Caco-2 (cell line): ENCODE measurements at regions of chr7 and their contacts with region 1.

Region 1: DNA sequence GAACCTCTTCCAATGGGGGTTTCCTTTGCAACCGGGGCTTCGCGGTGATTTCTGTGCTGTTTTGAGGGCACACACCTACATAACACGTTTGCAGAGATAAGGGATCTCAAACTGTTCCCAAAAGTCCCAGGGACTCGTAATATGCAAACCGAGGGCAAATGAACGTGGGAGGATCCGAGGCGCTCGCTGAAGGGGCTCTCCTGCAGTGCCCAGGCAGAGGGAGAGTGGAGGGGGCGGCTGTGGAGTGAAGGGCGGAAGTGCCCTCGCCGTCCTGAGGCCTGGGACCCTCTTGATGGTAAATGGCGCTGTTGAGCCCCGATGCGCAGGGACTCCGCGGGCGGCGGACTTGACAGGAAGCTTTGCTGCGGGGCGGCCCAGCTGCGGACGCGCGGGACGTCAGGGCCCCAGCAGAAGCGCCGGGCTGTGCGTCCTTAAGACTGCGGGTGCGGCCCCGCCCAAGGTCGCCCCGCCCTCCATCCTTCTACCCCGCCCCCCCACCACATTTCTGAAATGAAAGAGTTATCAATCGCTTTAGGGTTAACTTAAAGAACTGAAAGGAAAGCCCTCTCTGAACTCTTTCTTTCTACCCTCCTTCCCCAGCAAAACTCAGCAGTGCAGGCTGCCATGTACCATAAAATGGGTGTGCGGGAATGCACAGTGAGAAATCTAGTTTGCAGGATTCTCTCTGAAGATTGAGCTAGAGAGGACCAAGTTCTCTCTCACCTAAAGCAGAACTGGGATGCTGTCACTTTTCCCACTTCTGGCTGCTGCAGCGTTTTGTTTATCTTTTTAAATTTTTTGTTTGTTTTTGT is 151.8 kb upstream of the YAE1 start:
- DNase-seq: peak; percentile 58 to 61
- H3K4me3 ChIP-seq: peak overlapping the region; percentile 42
- H3K4me3 Mint-ChIP-seq: peak overlapping the region; percentile 91
- H3K27ac Mint-ChIP-seq: no peak overlapping the region
- H3K4me1 ChIP-seq: no peaks in the 10 kb centered on the region
- H3K4me1 Mint-ChIP-seq: peaks cover 6% of the 10 kb centered on the region
- H3K27me3 ChIP-seq: no peaks in the 10 kb centered on the region; the same call in 1 of the 2 replicates
- H3K27me3 Mint-ChIP-seq: peaks cover 11% of the 10 kb centered on the region
- CTCF ChIP-seq: peak in 1 of 2 experiments; percentile 33

Region 2: DNA sequence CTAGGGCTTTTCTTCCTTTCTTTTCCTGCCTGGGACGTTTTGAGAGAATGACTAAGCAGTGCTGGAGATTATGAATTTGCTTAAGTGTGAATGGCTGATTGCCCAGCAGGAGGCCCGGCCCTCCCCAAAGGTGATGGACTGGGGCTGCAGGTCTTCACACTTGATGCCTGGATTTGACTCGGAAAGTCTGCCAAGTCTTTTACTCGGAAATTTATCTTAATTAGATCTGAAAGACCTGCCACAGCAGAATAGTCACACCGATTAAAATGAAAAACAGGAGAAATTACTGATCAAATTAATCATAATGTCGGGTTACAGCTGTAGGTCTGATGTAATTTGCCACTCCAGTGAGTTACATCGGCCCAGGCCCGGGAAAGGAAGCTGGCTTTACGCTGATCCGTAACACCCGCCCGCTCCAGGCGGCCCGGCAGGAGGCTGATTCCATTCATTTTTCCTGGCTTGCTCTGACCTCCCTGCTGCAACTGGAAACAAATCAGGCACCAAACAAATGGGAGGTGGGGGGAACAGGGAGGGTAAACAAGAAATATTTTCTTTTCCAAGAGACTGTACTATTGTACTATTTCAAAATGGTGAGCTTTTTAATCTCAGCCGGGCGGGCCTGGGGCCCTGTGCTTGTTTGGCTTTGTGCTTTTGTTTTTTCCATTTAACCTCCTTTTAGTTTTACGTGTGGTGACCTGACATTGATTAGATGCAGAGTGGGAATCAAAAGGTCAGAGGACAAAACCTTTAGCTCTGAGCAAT is 60.6 kb before region 1 on chr7:
- CTCF ChIA-PET with region 1: no interaction called
- POLR2A ChIA-PET with region 1: no interaction called
- intact Hi-C with region 1: loop called (anchors 10 kb)
- DNase-seq: no peak
- H3K4me3 ChIP-seq: no peak overlapping the region
- H3K4me3 Mint-ChIP-seq: no peak overlapping the region
- H3K27ac Mint-ChIP-seq: no peak overlapping the region
- H3K4me1 ChIP-seq: no peaks in the 10 kb centered on the region
- H3K4me1 Mint-ChIP-seq: no peaks in the 10 kb centered on the region
- H3K27me3 ChIP-seq: no peaks in the 10 kb centered on the region
- H3K27me3 Mint-ChIP-seq: peaks cover 13% of the 10 kb centered on the region
- CTCF ChIP-seq: no peak

Region 3: DNA sequence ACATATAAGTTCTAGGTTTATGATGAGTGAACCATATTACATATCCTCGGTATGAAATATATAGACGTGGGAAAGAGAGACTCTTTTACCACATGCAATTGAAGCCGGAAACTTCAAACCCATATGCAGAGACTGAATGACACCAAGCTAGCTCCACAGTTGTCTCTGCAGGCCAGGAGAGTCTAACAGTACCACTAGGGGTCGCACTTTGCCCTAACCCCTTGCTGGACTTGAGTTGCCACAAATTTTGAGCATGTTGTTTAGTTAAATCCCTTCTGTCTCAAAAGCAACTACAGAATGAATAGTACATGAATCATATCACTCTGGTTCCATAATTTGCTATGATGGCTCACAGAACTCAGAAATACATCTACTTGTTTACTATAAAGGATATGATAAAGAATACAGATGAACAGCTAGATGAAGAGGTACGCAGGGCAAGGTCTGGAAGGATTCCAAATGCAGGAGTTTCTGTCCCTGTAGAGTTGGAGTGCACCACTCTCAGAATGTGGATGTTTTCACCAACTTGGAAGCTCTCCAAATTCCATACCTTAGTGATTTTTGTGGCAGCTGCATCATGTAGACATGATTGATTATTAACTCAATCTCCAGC is 39.4 kb after region 1 on chr7:
- CTCF ChIA-PET with region 1: no interaction called
- POLR2A ChIA-PET with region 1: no interaction called
- intact Hi-C with region 1: loop called (anchors 1 kb)
- DNase-seq: peak; percentile 53 to 62
- H3K4me3 ChIP-seq: no peak overlapping the region
- H3K4me3 Mint-ChIP-seq: no peak overlapping the region
- H3K27ac Mint-ChIP-seq: no peak overlapping the region
- H3K4me1 ChIP-seq: no peaks in the 10 kb centered on the region
- H3K4me1 Mint-ChIP-seq: no peaks in the 10 kb centered on the region
- H3K27me3 ChIP-seq: no peaks in the 10 kb centered on the region
- H3K27me3 Mint-ChIP-seq: peaks cover 5% of the 10 kb centered on the region
- CTCF ChIP-seq: peak; percentile 69 to 80

Region 4: DNA sequence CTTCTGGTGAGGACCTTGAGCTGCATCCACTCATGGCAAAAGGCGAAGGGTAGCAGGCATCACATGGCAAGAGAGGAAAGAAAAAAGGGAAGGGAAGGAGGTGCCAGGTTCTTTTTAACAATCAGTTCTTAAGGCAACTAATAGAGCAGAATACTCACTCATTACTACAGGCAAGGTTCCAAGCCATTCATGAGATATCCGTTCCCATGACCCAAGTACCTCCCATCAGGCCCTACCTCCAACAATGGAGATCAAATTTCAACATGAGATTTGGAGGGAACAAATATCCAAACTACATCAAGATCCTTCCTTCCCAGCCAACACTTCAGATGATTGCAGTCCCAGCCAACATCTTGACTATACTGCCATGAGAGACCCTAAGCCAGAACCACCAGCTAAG is 112.9 kb after region 1 on chr7:
- CTCF ChIA-PET with region 1: no interaction called
- POLR2A ChIA-PET with region 1: no interaction called
- intact Hi-C with region 1: no loop called
- DNase-seq: no peak
- H3K4me3 ChIP-seq: no peak overlapping the region
- H3K4me3 Mint-ChIP-seq: no peak overlapping the region
- H3K27ac Mint-ChIP-seq: no peak overlapping the region
- H3K4me1 ChIP-seq: no peaks in the 10 kb centered on the region
- H3K4me1 Mint-ChIP-seq: no peaks in the 10 kb centered on the region
- H3K27me3 ChIP-seq: no peaks in the 10 kb centered on the region
- H3K27me3 Mint-ChIP-seq: peaks cover 6% of the 10 kb centered on the region
- CTCF ChIP-seq: no peak

Region 5: DNA sequence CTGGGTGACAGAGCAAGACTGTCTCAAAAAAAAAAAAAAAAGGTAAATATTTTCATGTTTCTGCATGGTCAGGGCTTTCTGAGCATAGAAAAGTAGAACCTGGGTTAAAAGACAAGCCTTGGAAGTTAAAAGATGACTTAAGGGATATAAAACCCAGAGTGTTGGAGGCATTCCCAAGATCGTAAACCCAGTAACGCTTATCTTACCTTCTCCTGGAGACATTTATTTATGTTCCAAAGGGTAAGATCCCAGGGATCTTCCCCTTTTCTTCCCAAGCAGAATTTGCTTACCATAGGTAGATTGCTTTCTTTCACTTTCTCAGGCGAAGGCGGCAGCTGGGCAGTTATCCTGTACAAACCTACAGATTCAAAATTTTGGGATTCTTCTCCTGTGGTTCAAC is 742.6 kb after region 1 on chr7:
- CTCF ChIA-PET with region 1: no interaction called
- POLR2A ChIA-PET with region 1: no interaction called
- intact Hi-C with region 1: no loop called
- DNase-seq: no peak
- H3K4me3 ChIP-seq: no peak overlapping the region
- H3K4me3 Mint-ChIP-seq: peak overlapping the region; percentile 11
- H3K27ac Mint-ChIP-seq: no peak overlapping the region
- H3K4me1 ChIP-seq: peaks cover 3% of the 10 kb centered on the region
- H3K4me1 Mint-ChIP-seq: no peaks in the 10 kb centered on the region
- H3K27me3 ChIP-seq: no peaks in the 10 kb centered on the region
- H3K27me3 Mint-ChIP-seq: no peaks in the 10 kb centered on the region
- CTCF ChIP-seq: no peak